Ascending aorta (tissue), 2 donors: ENCODE measurements at regions of chr11 and their contacts with region 1.

Region 1: DNA sequence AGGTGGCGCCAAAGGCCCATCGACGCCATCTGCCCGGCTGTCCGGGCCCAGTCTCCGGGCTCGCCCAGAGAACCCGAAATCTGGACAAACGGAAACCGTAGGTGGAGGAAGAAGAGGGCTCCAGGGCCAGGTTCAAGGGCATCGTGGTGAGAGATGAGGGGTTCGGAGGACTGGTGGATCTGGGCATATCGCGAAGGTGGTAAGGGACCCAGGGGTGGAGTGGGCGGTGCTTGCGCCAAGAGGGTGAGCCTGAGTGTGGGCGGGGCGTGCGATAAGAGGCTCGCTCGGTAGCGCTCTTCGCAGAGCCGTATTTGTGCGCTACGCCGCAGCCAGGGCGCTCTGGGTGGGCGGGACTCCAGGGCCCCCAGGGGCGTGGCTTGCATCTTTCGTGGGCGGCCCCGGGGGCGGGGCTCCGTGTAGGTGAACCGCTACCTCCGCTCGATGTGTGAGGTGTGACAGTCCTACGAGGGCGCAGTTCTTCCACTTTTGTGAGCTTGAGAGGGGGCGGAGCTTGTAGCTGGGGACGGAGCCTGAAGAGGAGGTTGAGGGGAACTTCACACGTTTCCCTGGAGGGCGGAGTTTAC is 4.8 kb downstream of the CD248 start:
- DNase-seq: peak; percentile 71 to 93
- H3K4me3 ChIP-seq: peak overlapping the region; percentile 46 to 70
- H3K27ac ChIP-seq: peak overlapping the region; percentile 65 to 75
- H3K4me1 ChIP-seq: peaks cover 11 to 13% of the 10 kb centered on the region in 2 donors
- H3K27me3 ChIP-seq: no peaks in the 10 kb centered on the region
- CTCF ChIP-seq: peak; percentile 80 to 98 (median 98)

Region 2: GRCh38 chr11:65941720-65942310 is 370.2 kb before region 1 on chr11:
- intact Hi-C with region 1: no loop called
- DNase-seq: no peak
- H3K4me3 ChIP-seq: no peak overlapping the region
- H3K27ac ChIP-seq: no peak overlapping the region
- H3K4me1 ChIP-seq: no peaks in the 10 kb centered on the region
- H3K27me3 ChIP-seq: no peaks in the 10 kb centered on the region
- CTCF ChIP-seq: no peak

Region 3: DNA sequence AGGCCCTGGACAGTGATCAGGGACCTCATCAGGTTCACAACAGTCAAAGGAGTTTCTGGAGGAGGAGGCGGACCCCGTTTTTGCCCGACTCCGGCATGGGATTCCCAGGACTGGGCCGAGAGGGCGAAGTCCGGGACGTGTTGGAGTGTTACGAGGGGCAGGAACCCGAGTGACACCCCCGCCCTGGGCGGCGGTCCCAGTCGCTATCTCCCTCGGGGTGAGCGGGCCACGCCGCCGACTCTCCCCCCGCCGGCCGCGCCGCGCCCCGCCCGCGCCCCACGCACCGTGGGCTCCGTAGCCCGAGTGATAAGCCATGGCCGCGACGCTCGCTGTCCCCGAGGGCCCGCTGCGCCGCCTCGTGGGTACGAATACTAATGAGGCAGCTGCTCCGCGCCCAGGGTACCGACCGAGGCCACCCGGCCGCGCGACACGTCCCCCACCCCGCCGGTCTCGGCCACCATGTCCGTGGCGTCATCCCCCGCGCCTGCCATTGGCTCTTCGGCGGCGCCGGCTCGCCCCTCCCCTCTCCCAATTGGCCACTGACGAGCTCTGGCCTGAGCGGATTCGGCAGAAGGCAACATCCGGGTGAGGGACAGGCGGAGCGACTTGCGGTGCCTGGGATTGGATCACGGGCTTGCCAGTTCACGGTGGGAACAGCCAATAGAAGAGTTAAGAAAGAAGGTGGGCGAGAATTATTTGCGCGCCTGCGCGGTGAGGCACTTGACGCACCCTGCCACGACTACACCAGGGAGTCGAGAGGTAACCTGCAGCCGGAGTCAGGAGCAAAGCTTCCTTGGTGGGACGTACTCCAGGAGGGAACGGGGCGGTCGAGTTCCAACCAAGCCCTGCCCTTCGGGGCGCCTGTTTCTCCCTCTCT is 23.1 kb before region 1 on chr11 and contains the start of gene YIF1A:
- intact Hi-C with region 1: loop called (anchors 1 kb)
- DNase-seq: peak; percentile 98 to 99
- H3K4me3 ChIP-seq: peak within 1 kb of the TSS; percentile 72 to 74
- H3K27ac ChIP-seq: peak within 1 kb of the TSS; percentile 94
- H3K4me1 ChIP-seq: peaks cover 8 to 22% of the 10 kb centered on the region in 2 donors
- H3K27me3 ChIP-seq: peaks cover 8% of the 10 kb centered on the region
- CTCF ChIP-seq: no peak
- total RNA-seq, gene YIF1A: 161 TPM

Region 4: DNA sequence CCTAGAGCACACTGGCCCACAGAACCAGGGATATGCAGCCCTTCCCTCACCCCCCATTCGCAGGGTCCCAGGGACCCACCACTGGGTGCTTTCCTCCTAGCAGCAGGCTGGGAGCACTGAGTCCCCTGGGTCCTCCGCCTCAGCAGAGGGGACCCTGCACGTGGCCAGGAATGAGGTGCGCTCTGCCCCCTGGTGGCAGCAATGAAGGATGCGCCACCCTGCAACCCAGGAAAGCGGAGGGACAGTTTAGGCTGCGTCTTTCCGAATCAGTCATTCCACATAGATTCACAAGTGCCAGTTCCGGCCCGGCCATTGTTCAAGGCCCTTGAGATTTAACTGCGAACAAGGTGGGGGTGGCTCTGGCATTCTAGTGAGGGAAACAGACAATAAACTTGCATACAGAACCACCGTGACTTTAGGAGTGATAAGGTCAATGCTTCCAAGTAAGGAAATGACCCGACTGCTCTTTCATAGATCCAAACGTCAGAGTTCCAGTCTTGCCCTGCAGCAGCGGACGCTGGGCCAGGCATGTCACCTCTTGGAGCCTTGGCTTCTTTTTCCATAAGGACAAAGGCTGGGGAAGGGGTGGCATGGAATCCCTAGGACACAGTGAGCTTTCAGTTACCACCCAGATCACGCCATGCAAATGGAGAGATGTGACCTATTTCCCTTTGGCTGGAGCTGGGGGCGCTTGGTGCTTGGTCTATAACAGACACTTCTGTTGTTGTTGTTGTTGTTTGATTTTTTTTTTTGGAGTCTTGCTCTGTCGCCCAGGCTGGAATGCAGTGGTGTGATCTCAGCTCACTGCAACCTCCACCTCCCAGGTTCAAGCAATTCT is 16.5 kb after region 1 on chr11:
- intact Hi-C with region 1: loop called (anchors 1 kb)
- DNase-seq: peak in 1 of 2 donors; percentile 86
- H3K4me3 ChIP-seq: peak overlapping the region in 1 of 2 donors; percentile 23
- H3K27ac ChIP-seq: no peak overlapping the region
- H3K4me1 ChIP-seq: peaks cover 3 to 16% of the 10 kb centered on the region in 2 donors
- H3K27me3 ChIP-seq: no peaks in the 10 kb centered on the region
- CTCF ChIP-seq: peak; percentile 92 to 95 (median 94)

Region 5: DNA sequence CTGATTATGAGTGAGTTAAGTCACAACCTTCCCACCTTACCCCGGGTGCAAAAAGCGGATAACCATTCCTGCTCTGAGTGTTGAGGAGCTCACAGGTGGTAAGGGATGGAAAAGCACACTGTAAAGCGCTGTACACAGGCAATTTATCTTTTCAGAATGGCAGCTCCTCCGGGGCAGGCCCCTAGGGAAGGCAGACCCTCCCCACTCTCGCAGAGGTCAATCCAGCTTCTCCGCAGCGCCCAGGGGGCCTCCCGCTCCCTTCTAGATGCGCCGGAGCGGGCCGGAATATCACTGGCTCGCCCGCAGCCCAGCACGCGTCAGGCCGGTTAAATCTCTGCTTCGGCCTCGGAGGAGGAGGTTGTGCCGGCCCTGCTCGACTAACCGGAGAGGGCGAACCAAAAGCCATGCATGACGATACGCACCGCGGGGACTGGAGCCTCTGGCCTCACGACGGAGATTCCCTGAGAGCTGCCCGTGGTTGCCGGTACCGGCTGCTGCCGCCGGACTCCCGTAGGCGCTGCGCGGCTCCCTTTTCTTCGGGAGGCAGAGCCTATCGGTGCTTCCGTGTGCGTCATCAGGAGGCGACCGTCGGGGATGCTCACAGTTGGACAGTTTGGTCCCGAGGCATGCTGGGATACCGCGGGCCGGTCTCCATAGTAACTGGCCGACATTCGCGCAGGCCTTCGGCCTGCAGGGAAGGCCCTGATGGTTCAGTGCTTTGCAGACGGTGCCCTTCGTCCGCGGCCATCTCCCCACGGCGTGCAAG is 32.7 kb after region 1 on chr11 and contains the start of gene BRMS1:
- intact Hi-C with region 1: loop called (anchors 1 kb)
- DNase-seq: peak; percentile 94 to 99
- H3K4me3 ChIP-seq: peak within 1 kb of the TSS; percentile 65 to 90
- H3K27ac ChIP-seq: peak within 1 kb of the TSS; percentile 35 to 88
- H3K4me1 ChIP-seq: peaks cover 13 to 26% of the 10 kb centered on the region in 2 donors
- H3K27me3 ChIP-seq: no peaks in the 10 kb centered on the region
- CTCF ChIP-seq: peak; percentile 13 to 29 (median 23)
- total RNA-seq, gene BRMS1: 24.8 TPM

Region 6: DNA sequence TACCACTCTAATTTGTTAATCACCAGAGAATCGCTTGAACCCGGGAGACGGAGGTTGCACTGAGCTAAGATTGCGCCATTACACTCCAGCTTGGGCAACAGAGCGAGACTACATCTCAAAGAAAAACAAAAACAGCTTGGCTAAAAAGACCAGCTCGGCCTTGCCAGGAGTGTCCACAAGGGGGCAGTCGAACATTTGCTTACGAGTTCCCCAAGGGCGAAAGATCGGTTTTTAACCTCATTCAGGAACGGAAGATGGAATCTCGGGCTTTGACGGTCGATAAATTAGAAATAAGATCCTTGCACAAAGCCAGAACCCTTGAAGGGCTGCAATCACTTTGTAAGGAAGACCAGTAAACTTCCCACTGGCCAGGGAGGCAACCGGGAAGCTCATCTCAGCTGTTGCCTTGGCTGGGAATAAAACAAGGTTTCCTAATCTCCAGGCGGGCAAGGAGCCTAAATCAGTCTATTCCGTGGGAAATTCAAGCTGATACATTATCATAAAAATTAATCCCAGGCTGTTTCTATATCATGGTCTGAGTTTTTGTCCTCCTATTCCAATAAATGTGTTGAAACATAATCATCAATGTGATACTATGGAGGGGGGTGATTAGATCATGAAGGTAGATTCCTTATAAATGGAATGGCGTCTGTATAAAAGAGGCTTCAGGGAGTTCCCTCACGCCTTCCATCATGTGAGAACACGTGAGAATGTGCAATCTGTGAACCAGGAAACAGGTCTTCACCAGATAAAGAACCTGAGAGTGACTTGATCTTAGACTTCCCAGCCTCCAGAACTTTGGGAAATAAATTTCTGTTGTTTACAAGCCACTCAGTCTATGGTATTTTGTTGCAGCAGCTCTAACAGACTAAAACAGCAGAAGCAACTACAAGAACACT is 74.4 kb after region 1 on chr11:
- intact Hi-C with region 1: loop called (anchors 5 kb)
- DNase-seq: peak; percentile 45 to 92
- H3K4me3 ChIP-seq: peak overlapping the region in 1 of 2 donors; percentile 54
- H3K27ac ChIP-seq: no peak overlapping the region
- H3K4me1 ChIP-seq: peaks cover 0 to 2% of the 10 kb centered on the region in 2 donors
- H3K27me3 ChIP-seq: no peaks in the 10 kb centered on the region
- CTCF ChIP-seq: peak; percentile 57 to 95 (median 93)